CD8-positive, alpha-beta T cell (primary cell): ENCODE measurements at regions of chr16 and their contacts with region 1.

Region 1: GRCh38 chr16:89700100-89700648 is 1.3 kb downstream of the SPATA2L start:
- DNase-seq: peak; percentile 89 to 99 (median 96)
- ATAC-seq: peak; percentile 11
- H3K4me3 ChIP-seq: peak overlapping the region; percentile 50 to 96
- H3K4me3 Mint-ChIP-seq: peak overlapping the region; percentile 80
- H3K27ac ChIP-seq: peak overlapping the region; percentile 82 to 97
- H3K27ac Mint-ChIP-seq: peak overlapping the region; percentile 90
- H3K4me1 ChIP-seq: peaks cover 35% of the 10 kb centered on the region
- H3K4me1 Mint-ChIP-seq: peaks cover 16% of the 10 kb centered on the region
- H3K27me3 ChIP-seq: no peaks in the 10 kb centered on the region
- H3K27me3 Mint-ChIP-seq: no peaks in the 10 kb centered on the region
- CTCF ChIP-seq: peak; percentile 89

Region 2: GRCh38 chr16:89507834-89508590 is 192.2 kb before region 1 on chr16 and contains the start of gene SPG7:
- CTCF ChIA-PET with region 1: no interaction called
- POLR2A ChIA-PET with region 1: no interaction called
- intact Hi-C with region 1: loop called in 1 of 2 experiments (anchors 5 kb)
- DNase-seq: peak; percentile 85 to 96 (median 88)
- ATAC-seq: peak; percentile 73
- H3K4me3 ChIP-seq: peak within 1 kb of the TSS; percentile 61 to 91
- H3K4me3 Mint-ChIP-seq: peak within 1 kb of the TSS; percentile 96
- H3K27ac ChIP-seq: peak within 1 kb of the TSS; percentile 77 to 86
- H3K27ac Mint-ChIP-seq: peak within 1 kb of the TSS; percentile 96
- H3K4me1 ChIP-seq: peaks cover 37% of the 10 kb centered on the region
- H3K4me1 Mint-ChIP-seq: peaks cover 32% of the 10 kb centered on the region
- H3K27me3 ChIP-seq: no peaks in the 10 kb centered on the region
- H3K27me3 Mint-ChIP-seq: no peaks in the 10 kb centered on the region
- CTCF ChIP-seq: no peak
- total RNA-seq, gene SPG7: 159 to 180 TPM

Region 3: DNA sequence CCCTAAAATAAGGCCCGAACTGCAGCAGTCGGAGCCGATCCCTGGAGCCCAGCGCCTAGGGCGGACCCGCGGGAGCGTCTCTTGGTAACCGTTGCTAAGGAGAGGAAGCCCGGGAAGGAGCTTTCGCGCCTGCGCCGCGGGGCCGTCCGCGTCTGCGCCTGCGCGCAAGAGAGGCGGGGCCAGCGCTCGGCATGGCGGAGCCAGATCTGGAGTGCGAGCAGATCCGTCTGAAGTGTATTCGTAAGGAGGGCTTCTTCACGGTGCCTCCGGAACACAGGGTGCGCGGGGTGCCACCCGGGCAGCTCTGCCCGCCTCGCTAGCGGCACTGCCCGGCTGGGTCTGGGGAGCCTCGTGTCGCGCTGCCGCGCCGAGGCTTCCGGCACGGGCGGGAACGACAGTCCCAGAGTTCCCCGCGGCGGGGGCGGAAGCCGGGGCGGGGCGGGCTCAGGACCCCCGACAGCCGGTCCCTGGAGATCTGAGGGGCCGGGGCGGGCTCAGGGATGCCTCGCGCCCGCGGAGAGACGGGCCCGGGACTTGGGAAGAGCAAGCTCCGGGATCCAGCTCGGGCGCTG is 13.6 kb before region 1 on chr16 and contains the start of gene CDK10:
- CTCF ChIA-PET with region 1: interaction called, 20 read pairs
- POLR2A ChIA-PET with region 1: interaction called, 12 read pairs
- intact Hi-C with region 1: loop called (anchors 1 to 2 kb)
- DNase-seq: peak; percentile 76 to 94 (median 88)
- ATAC-seq: peak; percentile 92
- H3K4me3 ChIP-seq: peak within 1 kb of the TSS; percentile 79 to 98
- H3K4me3 Mint-ChIP-seq: peak within 1 kb of the TSS; percentile 89
- H3K27ac ChIP-seq: peak within 1 kb of the TSS; percentile 76 to 84
- H3K27ac Mint-ChIP-seq: peak within 1 kb of the TSS; percentile 92
- H3K4me1 ChIP-seq: peaks cover 15% of the 10 kb centered on the region
- H3K4me1 Mint-ChIP-seq: peaks cover 14% of the 10 kb centered on the region
- H3K27me3 ChIP-seq: no peaks in the 10 kb centered on the region
- H3K27me3 Mint-ChIP-seq: no peaks in the 10 kb centered on the region
- CTCF ChIP-seq: no peak
- total RNA-seq, gene CDK10: 67.0 to 73.1 TPM

Region 4: DNA sequence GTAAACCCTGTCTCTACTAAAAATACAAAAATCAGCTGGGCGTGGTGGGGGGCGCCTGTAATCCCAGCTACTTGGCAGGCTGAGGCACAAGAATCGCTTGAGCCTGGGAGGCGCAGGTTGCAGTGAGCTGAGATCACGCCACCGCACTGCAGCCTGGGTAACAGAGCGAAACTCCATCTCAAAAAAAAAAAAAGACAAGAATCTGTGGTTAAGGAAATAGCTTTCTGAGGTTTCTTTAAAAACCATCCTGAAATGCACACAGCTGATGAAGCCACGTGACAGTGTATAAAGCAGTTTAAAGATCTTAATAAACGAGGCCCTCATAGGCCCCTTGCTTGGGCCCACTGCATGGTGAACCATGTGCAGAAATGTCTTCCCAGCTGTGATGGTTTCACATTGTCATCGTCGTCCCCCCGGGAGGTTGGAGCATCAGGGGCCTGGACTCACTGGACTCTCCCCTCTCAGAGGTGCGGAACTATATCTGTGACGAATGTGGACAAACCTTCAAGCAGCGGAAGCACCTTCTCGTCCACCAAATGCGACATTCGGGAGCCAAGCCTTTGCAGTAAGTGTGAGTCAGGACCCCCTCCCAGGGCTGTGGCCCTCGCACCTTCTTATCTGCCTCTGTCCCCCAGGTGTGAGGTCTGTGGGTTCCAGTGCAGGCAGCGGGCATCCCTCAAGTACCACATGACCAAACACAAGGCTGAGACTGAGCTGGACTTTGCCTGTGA is 37.3 kb after region 1 on chr16:
- CTCF ChIA-PET with region 1: interaction called, 12 read pairs
- POLR2A ChIA-PET with region 1: interaction called, 3 read pairs
- intact Hi-C with region 1: loop called in 1 of 2 experiments (anchors 5 kb)
- DNase-seq: peak in 6 of 9 experiments; percentile 19 to 85 (median 65)
- ATAC-seq: peak; percentile 73
- H3K4me3 ChIP-seq: no peak overlapping the region
- H3K4me3 Mint-ChIP-seq: peak overlapping the region; percentile 43
- H3K27ac ChIP-seq: peak overlapping the region in 1 of 2 experiments; percentile 6
- H3K27ac Mint-ChIP-seq: peak overlapping the region; percentile 82
- H3K4me1 ChIP-seq: peaks cover 54% of the 10 kb centered on the region
- H3K4me1 Mint-ChIP-seq: peaks cover 48% of the 10 kb centered on the region
- H3K27me3 ChIP-seq: no peaks in the 10 kb centered on the region
- H3K27me3 Mint-ChIP-seq: no peaks in the 10 kb centered on the region
- CTCF ChIP-seq: no peak

Region 5: DNA sequence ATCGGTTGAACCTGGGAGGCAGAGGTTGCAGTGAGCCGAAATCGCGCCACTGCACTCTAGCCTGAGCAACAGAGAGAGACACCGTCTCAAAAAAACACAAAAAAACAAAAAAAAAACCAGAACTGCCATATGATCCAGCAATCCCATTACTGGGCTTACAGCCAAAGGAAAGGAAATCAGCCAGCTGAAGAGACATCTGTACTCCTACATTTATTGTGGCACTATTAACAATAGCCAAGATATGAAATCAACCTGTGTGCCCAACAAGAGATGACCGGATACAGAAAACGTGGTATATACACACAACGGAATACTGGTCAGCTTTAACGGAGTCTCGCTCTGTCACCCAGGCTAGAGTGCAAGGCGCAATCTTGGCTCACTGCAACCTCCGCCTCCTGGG is 101.6 kb after region 1 on chr16:
- CTCF ChIA-PET with region 1: interaction called, 352 read pairs
- POLR2A ChIA-PET with region 1: interaction called, 3 read pairs
- intact Hi-C with region 1: no loop called
- DNase-seq: no peak
- ATAC-seq: no peak
- H3K4me3 ChIP-seq: no peak overlapping the region
- H3K4me3 Mint-ChIP-seq: no peak overlapping the region
- H3K27ac ChIP-seq: no peak overlapping the region
- H3K27ac Mint-ChIP-seq: no peak overlapping the region
- H3K4me1 ChIP-seq: no peaks in the 10 kb centered on the region
- H3K4me1 Mint-ChIP-seq: no peaks in the 10 kb centered on the region
- H3K27me3 ChIP-seq: no peaks in the 10 kb centered on the region
- H3K27me3 Mint-ChIP-seq: no peaks in the 10 kb centered on the region
- CTCF ChIP-seq: no peak

Region 6: DNA sequence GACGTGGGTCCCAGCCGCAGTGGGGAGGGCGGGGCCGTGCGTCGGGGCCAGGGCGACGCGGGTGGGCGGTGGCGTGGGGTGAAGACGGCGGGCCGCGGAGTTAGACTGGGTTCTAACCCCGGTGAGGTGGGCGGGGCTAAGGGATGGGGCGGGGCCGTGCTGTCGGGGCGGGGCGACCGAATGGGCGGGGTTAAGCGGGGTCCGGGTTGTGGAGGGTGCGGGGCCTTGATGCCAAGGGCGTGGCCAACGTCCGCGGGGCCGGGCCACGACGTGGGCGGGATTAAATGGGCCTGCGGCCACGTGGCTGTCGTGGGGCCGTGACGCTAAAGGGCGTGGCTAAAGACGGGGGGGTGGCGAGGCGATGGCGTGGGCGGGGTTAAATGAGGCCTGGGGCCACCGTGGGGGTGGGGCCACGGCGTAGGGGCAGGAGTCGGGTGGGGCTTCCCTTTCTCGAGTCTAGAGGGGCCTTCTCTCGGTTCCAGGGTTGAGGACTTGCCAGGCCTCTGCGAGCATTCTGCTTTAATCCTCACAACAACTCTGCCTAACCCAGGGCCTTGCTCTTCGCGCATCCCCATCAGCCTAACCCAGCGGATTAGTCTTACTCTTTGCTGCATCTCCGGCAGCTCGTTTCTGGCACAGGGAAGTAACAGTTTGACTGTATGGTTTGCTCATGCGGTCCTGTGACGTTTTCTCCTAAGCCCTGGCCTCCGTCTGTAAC is 174.0 kb after region 1 on chr16:
- CTCF ChIA-PET with region 1: interaction called, 12 read pairs
- POLR2A ChIA-PET with region 1: interaction called, 13 read pairs
- intact Hi-C with region 1: loop called (anchors 1 kb)
- DNase-seq: peak; percentile 86 to 99 (median 96)
- ATAC-seq: peak; percentile 77
- H3K4me3 ChIP-seq: peak overlapping the region; percentile 98
- H3K4me3 Mint-ChIP-seq: peak overlapping the region; percentile 90
- H3K27ac ChIP-seq: peak overlapping the region; percentile 100
- H3K27ac Mint-ChIP-seq: peak overlapping the region; percentile 99
- H3K4me1 ChIP-seq: peaks cover 23% of the 10 kb centered on the region
- H3K4me1 Mint-ChIP-seq: peaks cover 19% of the 10 kb centered on the region
- H3K27me3 ChIP-seq: no peaks in the 10 kb centered on the region
- H3K27me3 Mint-ChIP-seq: no peaks in the 10 kb centered on the region
- CTCF ChIP-seq: no peak

Region 7: DNA sequence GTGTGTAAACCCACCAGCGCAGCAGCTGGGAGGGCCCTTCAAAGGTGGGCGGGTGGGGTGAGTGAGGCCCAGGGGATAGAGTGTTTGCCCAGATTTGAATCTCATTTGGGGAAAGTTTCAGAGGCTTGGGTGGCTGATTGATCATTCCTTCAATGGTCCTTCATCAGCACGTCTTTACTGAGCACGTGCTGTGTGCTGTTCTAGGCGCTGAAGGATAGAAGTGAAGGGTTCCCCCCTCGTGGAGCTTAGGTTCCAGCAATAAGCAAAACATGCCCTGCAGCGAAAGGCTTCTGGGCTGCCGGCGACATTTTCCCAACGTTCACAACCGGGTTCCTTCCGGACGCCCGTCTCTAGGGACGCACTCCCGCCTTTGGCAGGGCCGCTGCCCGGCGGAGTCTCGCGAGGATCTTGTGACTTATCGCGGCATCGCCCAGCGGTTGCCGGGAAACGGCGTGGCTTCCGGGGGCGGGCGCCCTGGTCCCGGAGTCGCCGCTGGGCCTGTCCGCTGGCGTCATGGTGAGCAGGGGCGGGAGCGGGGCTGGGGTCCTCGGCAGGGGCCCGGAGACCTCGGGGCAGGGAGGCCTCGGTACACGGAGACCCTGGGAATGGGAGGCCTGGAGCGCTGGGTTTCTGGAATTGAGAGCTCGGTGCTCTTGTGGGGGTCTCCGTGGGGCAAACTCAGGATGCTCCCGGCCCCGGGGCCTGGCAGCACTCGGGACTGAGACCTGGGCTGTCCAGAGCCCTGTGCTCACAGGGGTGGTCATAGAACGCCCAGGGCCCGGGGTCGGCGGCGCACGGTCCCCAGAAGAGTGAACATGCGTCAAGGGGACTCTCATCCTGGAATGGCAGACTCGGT is 322.3 kb after region 1 on chr16:
- CTCF ChIA-PET with region 1: no interaction called
- POLR2A ChIA-PET with region 1: no interaction called
- intact Hi-C with region 1: loop called in 1 of 2 experiments (anchors 5 kb)
- DNase-seq: peak; percentile 43 to 84 (median 71)
- ATAC-seq: peak; percentile 67
- H3K4me3 ChIP-seq: peak overlapping the region; percentile 45 to 63
- H3K4me3 Mint-ChIP-seq: peak overlapping the region; percentile 74
- H3K27ac ChIP-seq: no peak overlapping the region
- H3K27ac Mint-ChIP-seq: no peak overlapping the region
- H3K4me1 ChIP-seq: peaks cover 31% of the 10 kb centered on the region
- H3K4me1 Mint-ChIP-seq: peaks cover 26% of the 10 kb centered on the region
- H3K27me3 ChIP-seq: no peaks in the 10 kb centered on the region
- H3K27me3 Mint-ChIP-seq: no peaks in the 10 kb centered on the region
- CTCF ChIP-seq: no peak